ENCODE measurements at regions of chr10 and their contacts with region 1.

Region 1: DNA sequence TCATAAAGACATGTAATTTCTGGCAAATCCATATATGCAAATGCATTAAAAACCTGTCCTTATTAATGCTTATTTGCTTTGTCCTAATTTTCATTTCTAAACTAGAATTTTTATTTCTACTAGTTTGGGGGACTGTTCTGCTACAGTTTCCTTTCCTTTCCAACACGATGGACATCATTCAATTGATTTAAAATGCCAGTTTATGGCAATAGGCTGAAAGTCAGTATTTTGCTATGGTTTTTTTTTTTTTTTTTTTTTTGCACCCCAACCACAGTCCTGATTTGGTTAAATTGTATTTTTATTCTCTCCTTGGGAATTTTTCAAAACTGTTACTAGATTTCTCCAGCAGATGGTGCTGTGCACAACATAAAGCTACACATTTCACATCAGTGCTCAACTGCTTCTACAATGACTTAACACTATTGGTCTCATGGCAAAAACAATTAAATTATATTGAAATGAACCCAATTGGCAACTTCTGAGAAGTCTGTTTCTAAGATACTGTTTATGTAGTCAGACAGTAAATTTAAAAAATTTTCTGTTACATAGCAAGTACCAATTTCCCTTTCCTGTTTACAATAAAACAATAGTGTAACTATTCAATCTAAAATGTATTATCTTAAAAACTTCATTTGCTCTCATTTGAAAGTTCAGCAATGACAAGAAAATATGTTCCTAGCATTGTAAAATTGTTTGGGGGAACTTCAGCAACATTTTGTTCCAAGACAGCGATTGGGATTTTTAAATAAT is 193.8 kb upstream of the CCDC6 start:
- DNase-seq: no peak
- H3K4me3 ChIP-seq: no peak overlapping the region
- CTCF ChIP-seq: peak; percentile 44

Region 2: DNA sequence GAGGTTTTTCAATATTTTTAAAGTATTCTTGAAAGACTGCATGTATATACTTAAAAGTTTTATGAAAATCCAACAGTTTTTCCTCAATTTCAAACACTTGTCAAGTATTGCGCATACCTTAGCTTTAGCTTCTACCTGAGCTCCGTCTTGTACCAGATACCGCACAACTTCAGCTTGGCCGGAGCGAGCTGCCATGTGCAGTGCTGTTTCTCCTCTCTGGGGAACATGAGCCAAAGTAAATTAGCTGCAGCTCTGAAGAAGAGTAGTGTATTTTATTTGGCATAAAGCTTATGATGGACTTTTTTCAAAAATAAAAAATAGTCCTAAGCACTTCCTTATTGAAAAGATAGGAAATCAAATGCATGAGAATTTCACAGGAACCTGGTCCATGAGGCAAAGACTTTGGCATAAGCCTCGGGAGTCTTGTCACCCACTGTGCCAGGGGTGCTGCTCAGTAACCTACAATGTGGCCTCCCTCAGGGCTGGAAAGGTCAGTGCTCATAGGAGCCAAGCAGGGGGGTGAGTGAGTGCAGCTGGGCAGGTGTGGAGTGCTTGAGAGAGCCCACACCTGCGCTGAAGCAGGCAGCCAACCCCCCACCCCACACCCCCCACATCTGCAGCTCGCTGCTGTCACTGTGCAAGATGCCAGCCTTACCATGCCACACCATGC is 100.0 kb after region 1 on chr10:
- CTCF ChIA-PET with region 1: interaction called, 415 read pairs
- POLR2A ChIA-PET with region 1: no interaction called
- DNase-seq: no peak
- H3K4me3 ChIP-seq: no peak overlapping the region
- CTCF ChIP-seq: no peak

Region 3: DNA sequence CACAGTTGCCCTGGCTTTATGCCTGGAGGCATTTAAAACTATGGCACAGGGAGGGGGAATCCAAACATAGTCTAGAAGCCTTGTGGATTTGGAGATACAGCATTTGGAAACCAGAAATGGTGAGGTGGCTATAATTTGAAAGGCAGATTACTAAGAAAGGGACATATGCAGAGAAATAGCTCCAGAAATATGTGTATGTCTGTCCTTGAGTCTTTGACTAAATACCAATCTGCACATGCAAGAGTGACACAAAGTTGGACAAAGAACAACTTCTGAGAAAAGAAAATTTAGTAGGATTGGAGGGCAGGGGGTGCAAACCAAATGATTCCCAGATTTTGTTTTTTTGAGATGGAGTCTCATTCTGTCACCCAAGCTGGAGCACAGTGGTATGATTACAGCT is 1123.4 kb after region 1 on chr10:
- CTCF ChIA-PET with region 1: no interaction called
- POLR2A ChIA-PET with region 1: no interaction called
- DNase-seq: no peak
- H3K4me3 ChIP-seq: no peak overlapping the region
- CTCF ChIP-seq: no peak

Measured in AG04449 (cell line).